ENCODE measurements at regions of chr2 and their contacts with region 1.

Region 1: DNA sequence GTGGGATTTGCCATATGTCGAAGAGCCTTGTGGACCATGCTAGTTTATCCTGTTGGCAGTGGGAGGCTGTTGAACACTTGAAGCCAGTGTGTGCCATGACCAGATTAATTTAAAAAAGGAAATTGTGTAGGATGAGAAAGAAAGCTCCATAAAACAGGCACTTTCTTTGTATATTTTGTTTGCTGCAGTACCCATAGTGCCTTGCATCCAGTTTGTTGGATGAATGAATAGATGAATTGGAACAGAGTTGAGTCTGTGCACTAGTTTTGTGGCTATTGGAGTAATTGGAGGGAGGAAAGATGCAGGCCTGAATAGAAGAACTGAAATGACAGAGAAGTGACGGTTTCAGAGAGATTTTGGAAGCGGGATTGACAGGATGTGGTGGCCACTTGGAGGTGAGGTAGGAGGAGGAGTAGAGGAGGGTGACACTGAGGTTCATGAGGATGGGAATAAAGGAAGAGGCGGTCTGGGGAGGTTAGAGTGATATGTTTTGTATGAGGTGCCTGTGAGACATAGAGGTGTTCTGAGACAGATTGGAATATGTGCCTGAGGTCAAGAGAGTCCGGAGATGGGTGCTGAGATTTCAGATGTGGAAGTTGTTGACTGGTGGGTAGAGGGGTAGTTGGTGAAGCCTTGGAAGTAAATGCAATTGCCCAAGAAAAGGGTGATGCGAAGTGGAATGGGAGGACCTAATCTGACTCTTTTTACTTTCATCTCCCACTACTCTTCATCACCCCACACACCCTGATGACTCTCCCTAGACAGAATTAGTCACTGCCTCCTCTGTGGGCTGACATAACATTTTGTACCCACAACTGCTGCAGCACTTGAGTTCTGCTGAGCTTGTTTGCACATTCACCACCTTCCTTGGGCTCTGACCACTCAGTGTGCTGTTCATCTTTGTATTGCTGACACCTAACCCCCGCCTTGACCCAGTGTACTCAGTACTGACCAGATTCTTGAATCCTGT is 5.1 kb downstream of the DGUOK start:
- DNase-seq: peak; percentile 22
- H3K4me3 Mint-ChIP-seq: peak overlapping the region; percentile 35
- H3K27ac Mint-ChIP-seq: peak overlapping the region; percentile 82
- H3K4me1 Mint-ChIP-seq: peaks cover 63% of the 10 kb centered on the region
- H3K27me3 Mint-ChIP-seq: no peaks in the 10 kb centered on the region

Region 2: DNA sequence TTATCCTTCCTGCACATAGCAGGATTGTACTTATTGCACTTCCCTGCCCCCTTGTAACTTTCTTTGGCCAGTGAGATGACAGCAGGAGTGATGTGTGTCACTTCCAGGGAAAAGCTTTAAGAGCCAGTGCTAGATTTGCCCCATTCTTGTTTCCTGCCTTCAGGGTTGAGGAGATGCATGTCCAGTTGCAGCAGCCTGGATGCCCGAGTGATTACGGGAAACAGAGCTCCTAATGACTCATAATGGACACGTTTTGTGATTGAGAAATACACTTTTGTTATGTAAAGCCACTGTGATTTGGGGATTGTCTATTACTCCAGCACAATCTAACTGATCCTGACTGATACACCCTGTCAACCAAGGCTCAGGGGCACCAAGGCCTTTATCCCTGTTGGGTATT is 47.9 kb after region 1 on chr2:
- intact Hi-C with region 1: loop called (anchors 1 kb)
- DNase-seq: no peak
- H3K4me3 Mint-ChIP-seq: peak overlapping the region; percentile 56
- H3K27ac Mint-ChIP-seq: peak overlapping the region; percentile 65
- H3K4me1 Mint-ChIP-seq: peaks cover 67% of the 10 kb centered on the region
- H3K27me3 Mint-ChIP-seq: peaks cover 22% of the 10 kb centered on the region

Measured in activated T-helper 1 cell treated with anti-CD3 and anti-CD28 coated beads, Interleukin-12 subunit alpha, Interleukin-12 subunit beta, Interleukin-2, Interleukin-4 antibody, amounts not matched to agents 30 ng/mL and 10 ng/mL and 1 ng/mL, durations not matched to agents 14 hours and 24 hours and 36 hours (primary cell).